ENCODE measurements at regions of chr5 and their contacts with region 1.

Region 1: GRCh38 chr5:900781-901180 is 8.1 kb downstream of the TRIP13 start:
- DNase-seq: peak in 1 of 4 donors; percentile 5
- ATAC-seq: no peak
- H3K4me3 ChIP-seq: no peak overlapping the region
- H3K27ac ChIP-seq: no peak overlapping the region
- H3K4me1 ChIP-seq: peaks cover 3% of the 10 kb centered on the region
- H3K27me3 ChIP-seq: no peaks in the 10 kb centered on the region
- CTCF ChIP-seq: no peak
- POLR2A ChIP-seq: no peak

Region 2: GRCh38 chr5:671459-672328 is 229.1 kb before region 1 on chr5:
- intact Hi-C with region 1: loop called (anchors 2 kb)
- DNase-seq: peak; percentile 70 to 81 (median 76)
- ATAC-seq: peak; percentile 80
- H3K4me3 ChIP-seq: no peak overlapping the region
- H3K27ac ChIP-seq: peak overlapping the region in 1 of 4 donors; percentile 6
- H3K4me1 ChIP-seq: peaks cover 29% of the 10 kb centered on the region
- H3K27me3 ChIP-seq: no peaks in the 10 kb centered on the region
- CTCF ChIP-seq: peak; percentile 88 to 97 (median 91)
- POLR2A ChIP-seq: no peak